Esophagus squamous epithelium (tissue), 5 donors: ENCODE measurements at regions of chr12 and their contacts with region 1.

Region 1: DNA sequence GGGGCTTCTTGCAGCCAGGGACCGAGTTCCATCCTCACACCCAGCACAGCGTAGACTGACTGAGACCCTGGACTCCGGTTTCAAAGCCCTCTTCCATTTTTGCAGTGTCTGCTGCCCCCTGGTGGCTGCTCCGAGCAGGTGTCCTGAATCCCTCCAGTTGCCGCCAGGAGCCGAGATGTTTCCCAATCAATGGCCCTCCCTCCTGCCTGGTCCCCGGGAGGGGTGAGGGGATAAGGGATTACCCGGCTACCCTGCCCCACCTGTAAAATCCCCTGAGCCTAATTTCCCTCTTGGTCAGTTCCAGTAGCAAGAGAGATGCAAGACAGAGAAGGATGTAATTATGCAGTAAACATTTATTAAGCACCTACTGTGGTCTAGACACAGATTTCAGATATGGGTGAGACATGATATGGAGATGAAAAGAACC is 55.0 kb downstream of the PHETA1 start:
- DNase-seq: no peak
- H3K4me3 ChIP-seq: no peak overlapping the region
- H3K27ac ChIP-seq: no peak overlapping the region
- H3K4me1 ChIP-seq: peaks cover 0 to 5% (median 0%) of the 10 kb centered on the region in 3 donors
- H3K27me3 ChIP-seq: peaks cover 0 to 33% (median 0%) of the 10 kb centered on the region in 4 donors
- CTCF ChIP-seq: peak; percentile 76 to 90 (median 83)
- POLR2A ChIP-seq: no peak

Region 2: GRCh38 chr12:110893956-110894355 is 419.9 kb before region 1 on chr12:
- intact Hi-C with region 1: loop called (anchors 5 kb)
- DNase-seq: no peak
- H3K4me3 ChIP-seq: no peak overlapping the region
- H3K27ac ChIP-seq: no peak overlapping the region
- H3K4me1 ChIP-seq: peaks cover 6 to 29% (median 6%) of the 10 kb centered on the region in 3 donors
- H3K27me3 ChIP-seq: peaks cover 0 to 17% (median 0%) of the 10 kb centered on the region in 4 donors
- CTCF ChIP-seq: no peak
- POLR2A ChIP-seq: no peak

Region 3: GRCh38 chr12:111024205-111024801 is 289.5 kb before region 1 on chr12:
- intact Hi-C with region 1: loop called (anchors 10 kb)
- DNase-seq: no peak
- H3K4me3 ChIP-seq: no peak overlapping the region
- H3K27ac ChIP-seq: no peak overlapping the region
- H3K4me1 ChIP-seq: no peaks in the 10 kb centered on the region
- H3K27me3 ChIP-seq: peaks cover 0 to 95% (median 0%) of the 10 kb centered on the region in 4 donors
- CTCF ChIP-seq: peak; percentile 49 to 71 (median 60)
- POLR2A ChIP-seq: no peak

Region 4: GRCh38 chr12:111451649-111452129 is 137.8 kb after region 1 on chr12:
- intact Hi-C with region 1: no loop called
- DNase-seq: no peak
- H3K4me3 ChIP-seq: no peak overlapping the region
- H3K27ac ChIP-seq: peak overlapping the region in 1 of 4 donors; percentile 1
- H3K4me1 ChIP-seq: peaks cover 0 to 45% (median 5%) of the 10 kb centered on the region in 3 donors
- H3K27me3 ChIP-seq: no peaks in the 10 kb centered on the region
- CTCF ChIP-seq: peak; percentile 69 to 87 (median 76)
- POLR2A ChIP-seq: no peak

Region 5: GRCh38 chr12:112035219-112035765 is 721.4 kb after region 1 on chr12:
- intact Hi-C with region 1: no loop called
- DNase-seq: no peak
- H3K4me3 ChIP-seq: no peak overlapping the region
- H3K27ac ChIP-seq: no peak overlapping the region
- H3K4me1 ChIP-seq: no peaks in the 10 kb centered on the region
- H3K27me3 ChIP-seq: no peaks in the 10 kb centered on the region
- CTCF ChIP-seq: no peak
- POLR2A ChIP-seq: no peak